PC-3 (cell line): ENCODE measurements at regions of chr11 and their contacts with region 1.

Region 1: GRCh38 chr11:119356349-119357031 is 10.0 kb upstream of the MFRP start:
- DNase-seq: peak; percentile 70
- ATAC-seq: peak; percentile 41
- H3K4me3 ChIP-seq: peak overlapping the region; percentile 68
- H3K27ac ChIP-seq: no peak overlapping the region
- H3K4me1 ChIP-seq: peaks cover 23% of the 10 kb centered on the region
- H3K27me3 ChIP-seq: no peaks in the 10 kb centered on the region
- CTCF ChIP-seq: peak; percentile 92

Region 2: DNA sequence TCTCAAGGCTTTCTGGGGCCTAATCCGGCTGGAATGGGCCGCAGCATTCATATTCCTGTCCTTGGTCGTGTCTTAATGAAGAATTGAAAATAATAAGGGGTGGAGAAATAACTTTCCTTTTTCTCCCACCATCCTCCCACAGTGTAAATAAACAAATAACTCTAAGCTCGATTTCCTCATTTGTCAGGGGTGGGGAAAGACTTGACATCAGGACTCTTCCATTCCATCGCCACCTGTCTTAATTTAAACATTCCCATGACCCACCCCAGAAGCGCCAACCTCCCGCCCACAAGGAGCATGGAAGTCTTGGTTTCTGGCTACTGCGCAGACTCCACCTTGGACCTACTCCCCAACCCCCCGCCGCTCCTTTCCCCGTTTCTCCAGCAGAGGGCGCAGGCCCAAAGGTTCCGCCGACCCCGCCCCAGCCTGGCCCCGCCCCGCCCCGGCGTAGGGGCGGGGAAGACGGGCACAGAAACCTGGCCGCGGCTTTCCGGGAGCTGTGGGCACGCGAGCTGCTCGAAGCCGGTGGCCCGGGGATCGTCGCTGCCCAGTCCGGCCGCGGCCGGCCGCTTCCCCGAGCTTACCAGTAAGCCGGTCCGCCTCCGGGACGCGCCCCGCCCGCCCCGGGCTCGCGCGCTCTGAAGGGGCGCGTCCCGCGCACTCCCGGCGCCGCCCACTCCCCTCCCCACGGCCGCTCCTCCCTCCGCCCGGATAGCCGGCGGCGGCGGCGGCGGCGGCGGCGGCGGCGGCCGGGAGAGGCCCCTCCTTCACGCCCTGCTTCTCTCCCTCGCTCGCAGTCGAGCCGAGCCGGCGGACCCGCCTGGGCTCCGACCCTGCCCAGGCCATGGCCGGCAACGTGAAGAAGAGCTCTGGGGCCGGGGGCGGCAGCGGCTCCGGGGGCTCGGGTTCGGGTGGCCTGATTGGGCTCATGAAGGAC is 150.6 kb before region 1 on chr11 and contains the start of gene CBL:
- CTCF ChIA-PET with region 1: no interaction called
- POLR2A ChIA-PET with region 1: interaction called, 17 read pairs
- intact Hi-C with region 1: no loop called
- DNase-seq: peak; percentile 96
- ATAC-seq: peak; percentile 86
- H3K4me3 ChIP-seq: peak within 1 kb of the TSS; percentile 99
- H3K27ac ChIP-seq: peak within 1 kb of the TSS; percentile 58
- H3K4me1 ChIP-seq: peaks cover 18% of the 10 kb centered on the region
- H3K27me3 ChIP-seq: no peaks in the 10 kb centered on the region
- CTCF ChIP-seq: peak; percentile 88
- total RNA-seq, gene CBL: 11.4 and 15.3 TPM in 2 replicates

Region 3: GRCh38 chr11:119339589-119340343 is 16.7 kb before region 1 on chr11:
- CTCF ChIA-PET with region 1: interaction called, 13 read pairs
- POLR2A ChIA-PET with region 1: no interaction called
- intact Hi-C with region 1: no loop called
- DNase-seq: peak; percentile 47
- ATAC-seq: peak; percentile 29; the same call in 1 of the 2 replicates
- H3K4me3 ChIP-seq: peak overlapping the region; percentile 64
- H3K27ac ChIP-seq: no peak overlapping the region
- H3K4me1 ChIP-seq: peaks cover 37% of the 10 kb centered on the region
- H3K27me3 ChIP-seq: no peaks in the 10 kb centered on the region
- CTCF ChIP-seq: peak; percentile 89

Region 4: GRCh38 chr11:119381181-119381988 is 24.9 kb after region 1 on chr11 and contains the start of gene USP2:
- CTCF ChIA-PET with region 1: interaction called, 7 read pairs
- POLR2A ChIA-PET with region 1: no interaction called
- intact Hi-C with region 1: loop called (anchors 2 kb)
- DNase-seq: peak; percentile 99
- ATAC-seq: peak; percentile 97
- H3K4me3 ChIP-seq: peak within 1 kb of the TSS; percentile 80
- H3K27ac ChIP-seq: peak within 1 kb of the TSS; percentile 25
- H3K4me1 ChIP-seq: peaks cover 32% of the 10 kb centered on the region
- H3K27me3 ChIP-seq: no peaks in the 10 kb centered on the region
- CTCF ChIP-seq: peak; percentile 96
- total RNA-seq, gene USP2: 0.92 and 1.8 TPM in 2 replicates

Region 5: DNA sequence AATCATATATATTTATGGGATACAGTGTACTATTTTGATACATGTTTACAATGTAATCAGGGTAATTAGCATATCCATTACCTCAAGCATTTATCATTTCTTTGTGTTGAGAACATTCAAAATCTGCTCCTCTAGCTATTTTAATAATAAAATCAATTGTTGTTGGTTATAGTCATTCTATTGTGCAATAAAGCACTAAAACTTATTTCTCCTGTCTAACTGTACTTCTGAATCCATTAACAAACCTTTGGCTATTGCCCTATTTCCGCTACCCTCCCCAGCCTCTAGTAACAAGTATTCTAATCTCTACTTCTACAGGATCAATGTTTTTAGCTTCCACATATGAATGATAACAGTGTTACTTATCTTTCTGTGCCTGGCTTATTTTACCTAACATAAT is 40.3 kb after region 1 on chr11:
- CTCF ChIA-PET with region 1: no interaction called
- POLR2A ChIA-PET with region 1: no interaction called
- intact Hi-C with region 1: no loop called
- DNase-seq: no peak
- ATAC-seq: no peak
- H3K4me3 ChIP-seq: no peak overlapping the region
- H3K27ac ChIP-seq: no peak overlapping the region
- H3K4me1 ChIP-seq: no peaks in the 10 kb centered on the region
- H3K27me3 ChIP-seq: no peaks in the 10 kb centered on the region
- CTCF ChIP-seq: no peak

Region 6: DNA sequence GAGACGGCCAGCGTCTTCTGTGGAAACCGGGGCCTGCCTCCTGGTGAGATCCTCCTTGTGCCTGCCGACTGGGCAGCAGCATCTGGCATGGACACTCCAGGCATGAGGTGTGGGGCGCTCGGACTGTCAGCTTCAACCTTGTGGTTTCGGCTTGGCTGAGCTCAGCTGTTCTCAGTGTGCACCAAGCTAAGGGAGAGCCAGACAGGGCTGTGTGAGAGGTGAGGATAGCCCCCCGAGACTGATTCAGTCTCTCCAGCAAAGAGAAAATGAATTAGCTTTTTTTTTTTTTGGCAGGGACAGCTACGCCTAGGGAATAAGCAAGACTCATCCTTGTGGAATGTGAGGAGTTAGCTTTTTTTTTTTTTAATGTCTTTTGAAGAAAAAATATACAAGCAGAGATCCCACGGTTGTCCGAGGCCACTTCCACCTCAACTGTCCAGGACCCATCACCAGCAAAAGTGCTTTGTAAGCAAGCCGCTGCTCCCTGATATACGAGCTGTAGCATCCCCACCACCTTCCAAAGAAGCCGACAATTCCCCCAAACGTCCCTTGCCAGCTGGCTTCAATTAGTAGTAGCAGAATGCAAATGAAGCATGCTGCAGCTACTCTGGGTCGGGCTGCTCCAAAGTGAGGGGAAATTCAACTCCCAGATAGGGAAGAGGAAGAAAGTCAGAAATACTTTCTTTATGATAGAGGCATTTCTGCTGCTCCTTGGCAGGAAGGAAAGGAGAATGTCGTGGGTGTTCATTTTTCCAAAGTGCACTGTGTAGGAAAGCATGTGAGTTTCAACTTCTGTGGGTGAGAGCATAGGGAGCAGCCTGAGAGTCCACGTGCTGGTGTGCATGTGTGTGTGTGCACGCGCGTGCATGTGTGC is 76.2 kb after region 1 on chr11:
- CTCF ChIA-PET with region 1: no interaction called
- POLR2A ChIA-PET with region 1: interaction called, 11 read pairs
- intact Hi-C with region 1: no loop called
- DNase-seq: peak; percentile 68
- ATAC-seq: peak; percentile 57
- H3K4me3 ChIP-seq: no peak overlapping the region; the same call in 1 of the 2 replicates
- H3K27ac ChIP-seq: peak overlapping the region; percentile 32
- H3K4me1 ChIP-seq: peaks cover 21% of the 10 kb centered on the region
- H3K27me3 ChIP-seq: no peaks in the 10 kb centered on the region
- CTCF ChIP-seq: no peak